HCT116 (cell line): ENCODE measurements at regions of chr17 and their contacts with region 1.

Region 1: GRCh38 chr17:75632863-75633485 is at the start of gene SMIM5:
- DNase-seq: peak; percentile 63
- ATAC-seq: peak; percentile 89
- H3K4me3 ChIP-seq: peak within 1 kb of the TSS in 1 of 2 experiments; percentile 6; a peak in 1 of 4 replicates
- H3K27ac ChIP-seq: peak within 1 kb of the TSS; percentile 73
- H3K4me1 ChIP-seq: peaks cover 15 to 22% of the 10 kb centered on the region in 2 experiments
- H3K27me3 ChIP-seq: no peaks in the 10 kb centered on the region
- CTCF ChIP-seq: peak; percentile 95 to 99 (median 99)
- POLR2A ChIP-seq: no peak
- RAD21 ChIP-seq: peak; percentile 92
- total RNA-seq, gene SMIM5: 0.12 TPM

Region 2: GRCh38 chr17:75515496-75516254 is 117.3 kb before region 1 on chr17 and contains the start of gene CASKIN2:
- CTCF ChIA-PET with region 1: interaction called, 9 read pairs
- POLR2A ChIA-PET with region 1: no interaction called
- RAD21 ChIA-PET with region 1: no interaction called
- intact Hi-C with region 1: loop called (anchors 5 kb)
- DNase-seq: peak; percentile 88
- ATAC-seq: peak; percentile 77
- H3K4me3 ChIP-seq: peak within 1 kb of the TSS; percentile 87 to 91
- H3K27ac ChIP-seq: peak within 1 kb of the TSS; percentile 86
- H3K4me1 ChIP-seq: peaks cover 28 to 60% of the 10 kb centered on the region in 2 experiments
- H3K27me3 ChIP-seq: no peaks in the 10 kb centered on the region
- CTCF ChIP-seq: peak; percentile 100
- POLR2A ChIP-seq: no peak
- RAD21 ChIP-seq: peak; percentile 94
- total RNA-seq, gene CASKIN2: 38.4 TPM

Region 3: DNA sequence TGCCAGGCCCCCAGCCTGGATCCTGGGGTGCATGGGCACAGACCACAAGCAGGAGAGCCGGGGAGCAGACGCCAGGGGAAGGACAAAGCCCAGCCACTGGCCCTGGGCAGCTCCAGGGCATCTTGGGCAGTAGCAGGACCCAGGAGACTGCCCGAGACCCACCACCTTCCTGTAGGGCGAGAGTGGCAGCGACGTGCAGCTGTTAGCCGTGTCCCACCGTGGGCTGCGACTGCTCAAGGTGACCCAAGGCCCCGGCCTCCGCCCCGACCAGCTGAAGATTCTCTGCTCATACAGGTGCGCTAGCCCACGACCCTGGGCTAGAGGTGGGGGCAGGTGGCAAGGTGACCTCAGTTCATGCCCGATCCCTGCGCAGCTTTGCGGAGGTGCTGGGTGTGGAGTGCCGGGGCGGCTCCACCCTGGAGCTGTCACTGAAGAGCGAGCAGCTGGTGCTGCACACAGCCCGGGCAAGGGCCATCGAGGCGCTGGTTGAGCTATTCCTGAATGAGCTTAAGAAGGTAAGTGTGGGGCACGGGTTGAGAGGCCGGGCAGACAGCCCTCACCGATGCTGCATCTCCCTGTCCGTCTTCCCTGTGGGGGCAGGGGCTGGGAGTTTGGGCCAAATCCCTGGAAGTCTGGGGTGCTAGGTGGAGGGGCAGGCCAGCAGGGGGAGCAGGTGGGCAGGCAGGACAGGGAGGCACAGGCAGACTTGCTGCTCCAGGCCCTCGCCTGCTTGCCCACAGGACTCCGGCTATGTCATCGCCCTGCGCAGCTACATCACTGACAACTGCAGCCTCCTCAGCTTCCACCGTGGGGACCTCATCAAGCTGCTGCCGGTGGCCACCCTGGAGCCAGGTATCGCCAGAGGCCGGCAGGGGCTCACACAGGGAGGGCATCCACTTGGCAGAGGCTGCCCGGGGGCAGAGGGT is 13.2 kb before region 1 on chr17:
- CTCF ChIA-PET with region 1: interaction called, 63 read pairs
- POLR2A ChIA-PET with region 1: no interaction called
- RAD21 ChIA-PET with region 1: interaction called in 1 of 2 experiments, 3 read pairs
- intact Hi-C with region 1: no loop called
- DNase-seq: no peak
- ATAC-seq: peak; percentile 80
- H3K4me3 ChIP-seq: no peak overlapping the region
- H3K27ac ChIP-seq: no peak overlapping the region
- H3K4me1 ChIP-seq: peaks cover 0 to 5% of the 10 kb centered on the region in 2 experiments; a peak in 1 of 4 replicates
- H3K27me3 ChIP-seq: no peaks in the 10 kb centered on the region
- CTCF ChIP-seq: peak; percentile 41 to 73 (median 65); a peak in 5 of 6 replicates
- POLR2A ChIP-seq: no peak
- RAD21 ChIP-seq: no peak

Region 4: DNA sequence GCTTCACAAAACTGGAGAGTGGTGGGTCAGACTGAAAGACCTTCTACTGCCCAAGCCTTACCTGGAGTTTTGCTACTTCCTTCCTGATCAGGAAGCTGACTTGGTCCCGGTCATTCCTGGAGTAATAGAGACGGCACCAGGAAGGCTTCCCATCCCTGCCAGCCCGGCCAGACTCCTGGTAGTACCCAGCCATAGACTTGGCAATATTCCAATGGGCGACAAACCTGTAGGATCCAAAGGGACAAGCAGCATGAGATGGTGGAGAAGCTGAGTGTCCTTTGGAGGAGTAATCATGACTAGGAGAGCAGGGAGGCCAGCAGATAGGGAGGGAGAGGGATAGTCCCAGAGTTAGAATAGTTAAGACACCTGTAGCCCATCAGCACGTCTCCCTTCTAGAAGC is 25.3 kb after region 1 on chr17:
- CTCF ChIA-PET with region 1: interaction called, 75 read pairs
- POLR2A ChIA-PET with region 1: no interaction called
- RAD21 ChIA-PET with region 1: interaction called, 7 to 13 read pairs
- intact Hi-C with region 1: loop called (anchors 1 kb)
- DNase-seq: no peak
- ATAC-seq: no peak
- H3K4me3 ChIP-seq: no peak overlapping the region
- H3K27ac ChIP-seq: no peak overlapping the region
- H3K4me1 ChIP-seq: no peaks in the 10 kb centered on the region
- H3K27me3 ChIP-seq: no peaks in the 10 kb centered on the region
- CTCF ChIP-seq: no peak
- POLR2A ChIP-seq: no peak
- RAD21 ChIP-seq: no peak

Region 5: GRCh38 chr17:75684924-75685323 is 52.0 kb after region 1 on chr17:
- CTCF ChIA-PET with region 1: interaction called, 17 read pairs
- POLR2A ChIA-PET with region 1: no interaction called
- RAD21 ChIA-PET with region 1: no interaction called
- intact Hi-C with region 1: no loop called
- DNase-seq: no peak
- ATAC-seq: peak; percentile 70
- H3K4me3 ChIP-seq: peak overlapping the region in 1 of 2 experiments; percentile 45; a peak in 3 of 4 replicates
- H3K27ac ChIP-seq: peak overlapping the region; percentile 67
- H3K4me1 ChIP-seq: peaks cover 71 to 100% of the 10 kb centered on the region in 2 experiments
- H3K27me3 ChIP-seq: no peaks in the 10 kb centered on the region
- CTCF ChIP-seq: no peak
- POLR2A ChIP-seq: no peak
- RAD21 ChIP-seq: no peak

Region 6: DNA sequence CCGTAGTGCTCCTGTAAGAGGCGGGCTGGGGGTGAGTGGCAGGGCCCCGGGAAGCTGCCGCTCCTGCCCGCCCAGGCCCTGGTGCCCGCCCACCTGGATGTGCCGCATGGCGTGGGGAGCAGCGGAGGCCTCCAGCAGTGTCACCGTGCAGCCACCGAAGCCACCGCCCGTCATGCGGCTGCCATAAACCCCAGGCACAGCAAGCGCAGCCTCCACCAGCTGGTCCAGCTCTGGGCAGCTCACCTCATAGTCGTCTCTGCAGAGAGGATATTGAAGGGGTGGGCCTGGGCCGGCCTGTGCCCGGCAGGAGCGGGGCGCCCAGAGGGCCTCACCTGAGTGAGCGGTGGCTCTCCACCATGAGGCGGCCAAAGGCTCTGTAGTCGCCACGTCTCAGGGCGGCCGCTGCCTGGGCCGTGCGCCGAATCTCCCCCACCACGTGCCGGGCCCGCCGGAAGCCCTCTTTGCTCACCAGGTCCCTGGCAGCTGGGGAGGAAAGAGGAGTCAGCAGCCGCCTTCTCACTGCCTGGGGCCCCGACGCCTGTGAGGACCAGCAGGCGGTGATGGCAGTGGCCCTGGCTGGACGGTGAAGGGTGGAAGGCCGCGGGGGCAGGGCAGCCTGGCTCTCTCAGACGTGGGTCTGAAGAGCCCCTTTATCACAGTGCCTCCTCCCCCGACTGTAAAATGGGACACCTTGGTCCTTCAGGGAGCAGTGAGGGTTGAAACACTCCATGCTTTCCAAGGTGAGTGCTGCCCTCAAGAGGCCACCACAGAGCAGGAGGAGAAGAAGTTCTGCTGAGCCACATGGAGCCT is 125.3 kb after region 1 on chr17:
- CTCF ChIA-PET with region 1: interaction called, 10 read pairs
- POLR2A ChIA-PET with region 1: no interaction called
- RAD21 ChIA-PET with region 1: no interaction called
- intact Hi-C with region 1: no loop called
- DNase-seq: no peak
- ATAC-seq: peak; percentile 70
- H3K4me3 ChIP-seq: no peak overlapping the region
- H3K27ac ChIP-seq: no peak overlapping the region; the same call in 1 of the 2 replicates
- H3K4me1 ChIP-seq: peaks cover 2 to 9% of the 10 kb centered on the region in 2 experiments; a peak in 3 of 4 replicates
- H3K27me3 ChIP-seq: no peaks in the 10 kb centered on the region
- CTCF ChIP-seq: peak; percentile 57 to 73 (median 63); a peak in 5 of 6 replicates
- POLR2A ChIP-seq: no peak
- RAD21 ChIP-seq: peak; percentile 75